ENCODE measurements at regions of chr9 and their contacts with region 1.

Region 1: GRCh38 chr9:119009249-119009648 is 360.0 kb downstream of the BRINP1 start:
- DNase-seq: no peak
- H3K4me3 ChIP-seq: no peak overlapping the region
- H3K27ac ChIP-seq: no peak overlapping the region
- H3K4me1 ChIP-seq: 0 out of 7 replicates have a peak, but pooled peaks cover 0 to 3% (median 0%) of the 10 kb centered on the region in 4 experiments
- H3K27me3 ChIP-seq: no peaks in the 10 kb centered on the region
- CTCF ChIP-seq: no peak
- EP300 ChIP-seq: no peak
- POLR2A ChIP-seq: no peak
- RAD21 ChIP-seq: no peak

Region 2: DNA sequence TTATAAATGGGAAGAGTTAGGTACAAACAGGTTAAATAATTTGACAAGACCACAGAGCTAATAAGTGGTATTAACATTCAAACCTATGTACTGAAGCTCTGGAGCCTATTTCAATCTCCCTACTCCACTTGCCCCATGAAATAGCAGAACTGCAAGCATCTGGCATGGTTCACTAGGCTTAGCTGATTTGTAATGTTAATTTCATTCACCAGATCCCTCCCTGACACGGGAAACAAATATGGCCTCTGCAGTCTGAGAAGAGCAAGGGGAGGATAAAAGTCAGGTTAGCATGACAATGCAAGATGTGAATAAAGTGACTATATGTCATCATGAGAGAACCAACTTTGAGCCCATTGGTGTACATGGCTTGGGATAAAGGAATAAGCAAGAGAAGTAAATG is 68.8 kb before region 1 on chr9:
- CTCF ChIA-PET with region 1: no interaction called
- POLR2A ChIA-PET with region 1: no interaction called
- DNase-seq: no peak
- H3K4me3 ChIP-seq: no peak overlapping the region
- H3K27ac ChIP-seq: no peak overlapping the region
- H3K4me1 ChIP-seq: no peaks in the 10 kb centered on the region
- H3K27me3 ChIP-seq: no peaks in the 10 kb centered on the region
- CTCF ChIP-seq: no peak
- EP300 ChIP-seq: no peak
- POLR2A ChIP-seq: no peak
- RAD21 ChIP-seq: no peak

Region 3: DNA sequence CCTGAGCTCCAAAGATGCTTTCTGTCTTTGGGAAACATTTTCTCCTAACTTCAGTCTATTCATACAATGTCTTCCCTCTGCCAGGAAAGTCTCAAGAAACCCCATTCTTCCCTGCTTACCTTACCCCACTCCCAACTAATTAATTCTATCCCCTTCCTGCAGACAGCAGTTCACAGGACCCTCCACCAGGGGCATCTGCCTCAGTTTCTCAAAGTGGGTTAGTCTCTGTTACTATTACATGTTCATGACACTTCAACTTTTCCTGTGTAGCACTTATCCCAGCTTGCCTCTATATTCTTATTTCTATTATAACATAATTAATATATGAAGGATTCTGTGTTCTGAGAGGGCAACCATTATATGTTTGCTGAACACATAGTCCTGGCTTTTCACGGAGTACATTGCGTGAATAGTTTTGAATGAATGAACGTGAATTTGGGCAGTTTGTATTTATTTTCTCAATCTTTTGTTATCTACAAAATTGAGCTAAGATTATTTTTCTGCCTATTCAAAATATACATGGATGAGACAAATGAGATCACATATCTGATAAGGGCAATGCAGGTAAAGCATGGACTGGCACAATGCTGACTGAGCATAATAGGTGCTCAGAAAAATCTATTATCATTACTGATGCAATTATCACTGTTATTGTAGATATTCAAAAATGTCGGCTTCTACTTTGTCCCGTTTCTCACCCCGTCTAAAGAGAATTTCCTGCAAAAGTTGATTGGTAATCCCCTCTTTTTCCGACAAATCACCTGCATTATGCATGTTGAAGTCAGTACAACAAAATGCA is 18.9 kb after region 1 on chr9:
- CTCF ChIA-PET with region 1: interaction called, 17 read pairs
- POLR2A ChIA-PET with region 1: no interaction called
- DNase-seq: peak in 1 of 2 experiments; percentile 47
- H3K4me3 ChIP-seq: no peak overlapping the region
- H3K27ac ChIP-seq: no peak overlapping the region
- H3K4me1 ChIP-seq: no peaks in the 10 kb centered on the region
- H3K27me3 ChIP-seq: no peaks in the 10 kb centered on the region
- CTCF ChIP-seq: peak; percentile 22 to 52 (median 43); a peak in 3 of 4 replicates
- EP300 ChIP-seq: no peak
- POLR2A ChIP-seq: no peak
- RAD21 ChIP-seq: peak in 1 of 2 experiments; percentile 29; a peak in 1 of 4 replicates